IMR-90 (cell line): ENCODE measurements at regions of chr13 and their contacts with region 1.

Region 1: DNA sequence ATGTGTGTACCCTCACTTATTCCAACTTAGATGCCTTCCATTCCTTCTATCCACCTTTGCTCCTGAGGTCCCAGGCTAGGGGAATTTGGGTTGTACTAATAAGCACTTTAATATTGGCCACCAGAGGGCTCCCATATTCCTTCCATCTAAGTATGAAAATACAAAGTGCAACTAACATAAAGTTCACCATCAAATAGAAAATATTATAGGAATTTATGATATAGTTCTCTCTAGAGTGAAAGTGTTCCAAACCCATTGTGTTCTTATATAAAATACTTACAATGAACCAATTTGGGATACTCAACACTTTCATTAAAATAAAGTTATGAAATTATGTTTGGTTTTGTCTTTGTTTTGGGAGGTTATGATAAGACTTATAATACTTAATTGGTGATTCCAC is 62.3 kb downstream of the ITGBL1 start:
- DNase-seq: peak; percentile 68
- ATAC-seq: peak; percentile 76
- H3K4me3 ChIP-seq: no peak overlapping the region
- H3K27ac ChIP-seq: no peak overlapping the region
- H3K4me1 ChIP-seq: no peaks in the 10 kb centered on the region
- H3K27me3 ChIP-seq: no peaks in the 10 kb centered on the region
- CTCF ChIP-seq: peak; percentile 69
- POLR2A ChIP-seq: no peak
- RAD21 ChIP-seq: peak; percentile 73

Region 2: DNA sequence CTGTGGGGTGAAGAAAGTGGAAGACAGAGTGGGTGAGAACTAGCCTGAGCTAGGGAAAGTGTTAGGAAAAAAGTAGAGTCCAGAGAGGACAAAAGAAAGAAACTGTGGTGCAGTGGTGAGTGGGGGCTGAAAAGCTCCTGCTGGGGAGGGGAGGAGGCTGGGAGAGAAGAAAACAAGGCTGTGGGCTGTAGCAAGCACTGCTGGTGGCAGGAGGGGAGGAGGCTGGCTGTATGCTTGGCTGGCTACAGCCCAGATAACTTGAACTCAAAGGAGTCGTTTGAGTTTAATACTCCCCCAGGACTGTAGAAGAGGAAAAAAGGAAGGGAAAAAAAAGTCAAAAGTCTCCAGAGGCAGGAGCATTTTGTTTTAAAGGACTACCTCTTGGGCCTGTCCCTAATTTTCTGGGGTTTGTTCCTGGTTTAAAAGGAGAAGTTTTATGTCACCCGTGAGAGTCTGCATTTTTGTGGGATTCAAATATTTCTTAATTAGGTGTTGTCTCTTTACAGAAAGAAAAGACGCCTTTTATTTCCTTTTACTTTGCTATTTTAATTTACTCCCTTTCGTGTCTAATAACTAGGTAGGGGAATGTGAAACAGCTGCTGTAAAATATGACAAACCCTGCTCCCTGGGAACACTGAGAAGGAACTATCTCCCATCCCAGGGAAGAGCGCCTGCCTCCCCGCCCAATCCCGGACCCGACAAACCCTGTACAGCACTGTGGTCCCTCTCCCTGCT is 1564.9 kb before region 1 on chr13:
- CTCF ChIA-PET with region 1: no interaction called
- POLR2A ChIA-PET with region 1: no interaction called
- dilution Hi-C with region 1: no loop called
- in situ Hi-C with region 1: no loop called
- intact Hi-C with region 1: no loop called
- DNase-seq: no peak
- ATAC-seq: no peak
- H3K4me3 ChIP-seq: no peak overlapping the region
- H3K27ac ChIP-seq: no peak overlapping the region
- H3K4me1 ChIP-seq: no peaks in the 10 kb centered on the region
- H3K27me3 ChIP-seq: peaks cover 60% of the 10 kb centered on the region
- CTCF ChIP-seq: no peak
- POLR2A ChIP-seq: no peak
- RAD21 ChIP-seq: no peak

Region 3: DNA sequence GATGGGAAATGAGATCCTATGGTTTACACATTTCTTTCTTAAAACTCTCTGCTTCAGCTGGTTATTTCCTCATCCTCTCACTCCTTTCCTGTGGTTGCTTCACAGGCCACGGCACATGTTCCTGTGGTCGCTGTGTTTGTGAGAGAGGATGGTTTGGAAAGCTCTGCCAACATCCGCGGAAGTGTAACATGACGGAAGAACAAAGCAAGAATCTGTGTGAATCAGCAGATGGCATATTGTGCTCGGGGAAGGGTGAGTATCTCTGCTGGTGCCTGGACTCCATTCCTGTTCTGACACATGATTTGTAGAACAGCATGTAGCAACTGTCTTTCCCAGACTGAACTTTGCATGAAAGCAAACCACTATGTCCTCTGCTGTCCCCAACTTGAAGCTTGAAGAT is 191.9 kb after region 1 on chr13:
- CTCF ChIA-PET with region 1: no interaction called
- POLR2A ChIA-PET with region 1: no interaction called
- dilution Hi-C with region 1: no loop called
- in situ Hi-C with region 1: no loop called
- intact Hi-C with region 1: loop called (anchors 5 kb)
- DNase-seq: peak; percentile 94
- ATAC-seq: peak; percentile 94
- H3K4me3 ChIP-seq: no peak overlapping the region
- H3K27ac ChIP-seq: no peak overlapping the region
- H3K4me1 ChIP-seq: no peaks in the 10 kb centered on the region
- H3K27me3 ChIP-seq: no peaks in the 10 kb centered on the region
- CTCF ChIP-seq: no peak
- POLR2A ChIP-seq: no peak
- RAD21 ChIP-seq: 0 out of 2 replicates have a peak, but pooled peaks have one; percentile 3

Region 4: DNA sequence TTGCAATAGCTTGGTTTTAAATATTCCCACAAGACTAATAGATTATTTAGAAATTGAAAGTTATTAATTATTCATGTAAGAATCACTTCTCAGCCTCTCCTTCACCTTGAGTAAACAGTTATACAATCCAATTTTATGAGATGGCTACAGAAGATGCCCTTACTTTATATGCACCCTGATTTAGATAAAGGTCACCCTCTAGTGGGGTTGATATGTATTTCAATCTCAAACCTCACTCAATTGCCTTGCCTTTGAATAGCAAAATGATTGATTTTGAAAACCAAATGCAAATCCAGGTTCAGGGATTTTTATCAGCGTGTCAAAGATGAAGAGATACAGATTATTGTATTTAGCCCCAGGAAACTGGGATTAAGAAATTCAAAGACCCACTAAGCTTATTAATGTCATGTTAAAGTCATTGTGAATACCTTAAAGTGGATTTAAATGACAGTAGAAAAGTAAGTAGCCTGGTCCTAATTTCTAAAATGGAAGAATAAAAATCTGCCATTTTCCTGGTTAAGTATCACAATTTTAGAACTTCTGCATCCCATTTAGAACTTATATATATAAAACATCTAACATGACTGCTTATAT is 242.8 kb after region 1 on chr13:
- CTCF ChIA-PET with region 1: interaction called, 4 read pairs
- POLR2A ChIA-PET with region 1: no interaction called
- dilution Hi-C with region 1: no loop called
- in situ Hi-C with region 1: loop called (anchors 5 kb)
- intact Hi-C with region 1: loop called (anchors 1 kb)
- DNase-seq: peak; percentile 50
- ATAC-seq: peak; percentile 73; the same call in 1 of the 2 replicates
- H3K4me3 ChIP-seq: no peak overlapping the region
- H3K27ac ChIP-seq: no peak overlapping the region
- H3K4me1 ChIP-seq: no peaks in the 10 kb centered on the region
- H3K27me3 ChIP-seq: peaks cover 2% of the 10 kb centered on the region; the same call in 1 of the 2 replicates
- CTCF ChIP-seq: peak; percentile 73
- POLR2A ChIP-seq: no peak
- RAD21 ChIP-seq: peak; percentile 80

Region 5: DNA sequence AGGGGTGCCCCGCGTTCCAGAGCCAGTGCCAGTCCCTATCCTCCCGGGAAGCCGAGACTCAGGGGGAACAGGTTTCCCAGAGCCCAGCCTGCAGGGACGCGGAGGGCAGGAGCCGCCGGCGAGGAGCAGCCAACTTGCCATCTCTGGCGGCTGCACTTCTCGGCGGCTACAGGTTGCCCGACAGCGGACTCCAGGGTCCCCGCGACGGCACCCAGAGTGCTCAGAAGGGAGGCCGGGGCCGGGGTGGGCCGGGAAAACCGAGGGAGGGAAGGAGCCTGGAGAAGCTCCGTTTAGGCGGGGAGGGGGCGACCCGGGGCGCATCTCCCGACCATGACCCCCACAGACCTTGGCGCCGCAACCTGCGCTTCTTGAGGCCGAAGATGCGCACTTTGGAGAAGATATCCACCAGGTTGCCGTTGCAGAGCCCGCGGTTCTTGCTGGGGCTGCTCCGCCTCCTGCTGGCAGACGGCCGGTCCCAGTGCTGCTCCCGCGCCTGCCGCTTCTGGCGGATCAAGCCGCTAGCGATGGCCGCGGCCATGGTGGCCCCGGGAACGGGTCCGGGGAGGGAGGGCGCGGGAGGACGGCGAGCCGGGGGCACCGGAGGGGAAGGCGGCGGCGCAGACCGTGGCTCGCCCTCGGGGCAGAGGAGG is 401.4 kb after region 1 on chr13:
- CTCF ChIA-PET with region 1: no interaction called
- POLR2A ChIA-PET with region 1: no interaction called
- dilution Hi-C with region 1: no loop called
- in situ Hi-C with region 1: no loop called
- intact Hi-C with region 1: loop called (anchors 5 kb)
- DNase-seq: no peak
- ATAC-seq: peak; percentile 60
- H3K4me3 ChIP-seq: no peak overlapping the region
- H3K27ac ChIP-seq: no peak overlapping the region
- H3K4me1 ChIP-seq: no peaks in the 10 kb centered on the region
- H3K27me3 ChIP-seq: peaks cover 38% of the 10 kb centered on the region
- CTCF ChIP-seq: no peak
- POLR2A ChIP-seq: no peak
- RAD21 ChIP-seq: 0 out of 2 replicates have a peak, but pooled peaks have one; percentile 4

Region 6: GRCh38 chr13:102440259-102440936 is 925.6 kb after region 1 on chr13:
- CTCF ChIA-PET with region 1: no interaction called
- POLR2A ChIA-PET with region 1: no interaction called
- dilution Hi-C with region 1: no loop called
- in situ Hi-C with region 1: loop called (anchors 25 kb)
- intact Hi-C with region 1: no loop called
- DNase-seq: no peak
- ATAC-seq: no peak
- H3K4me3 ChIP-seq: no peak overlapping the region
- H3K27ac ChIP-seq: no peak overlapping the region
- H3K4me1 ChIP-seq: no peaks in the 10 kb centered on the region
- H3K27me3 ChIP-seq: no peaks in the 10 kb centered on the region
- CTCF ChIP-seq: no peak
- POLR2A ChIP-seq: no peak
- RAD21 ChIP-seq: no peak